CD4-positive, alpha-beta memory T cell (primary cell): ENCODE measurements at regions of chr10 and their contacts with region 1.

Region 1: DNA sequence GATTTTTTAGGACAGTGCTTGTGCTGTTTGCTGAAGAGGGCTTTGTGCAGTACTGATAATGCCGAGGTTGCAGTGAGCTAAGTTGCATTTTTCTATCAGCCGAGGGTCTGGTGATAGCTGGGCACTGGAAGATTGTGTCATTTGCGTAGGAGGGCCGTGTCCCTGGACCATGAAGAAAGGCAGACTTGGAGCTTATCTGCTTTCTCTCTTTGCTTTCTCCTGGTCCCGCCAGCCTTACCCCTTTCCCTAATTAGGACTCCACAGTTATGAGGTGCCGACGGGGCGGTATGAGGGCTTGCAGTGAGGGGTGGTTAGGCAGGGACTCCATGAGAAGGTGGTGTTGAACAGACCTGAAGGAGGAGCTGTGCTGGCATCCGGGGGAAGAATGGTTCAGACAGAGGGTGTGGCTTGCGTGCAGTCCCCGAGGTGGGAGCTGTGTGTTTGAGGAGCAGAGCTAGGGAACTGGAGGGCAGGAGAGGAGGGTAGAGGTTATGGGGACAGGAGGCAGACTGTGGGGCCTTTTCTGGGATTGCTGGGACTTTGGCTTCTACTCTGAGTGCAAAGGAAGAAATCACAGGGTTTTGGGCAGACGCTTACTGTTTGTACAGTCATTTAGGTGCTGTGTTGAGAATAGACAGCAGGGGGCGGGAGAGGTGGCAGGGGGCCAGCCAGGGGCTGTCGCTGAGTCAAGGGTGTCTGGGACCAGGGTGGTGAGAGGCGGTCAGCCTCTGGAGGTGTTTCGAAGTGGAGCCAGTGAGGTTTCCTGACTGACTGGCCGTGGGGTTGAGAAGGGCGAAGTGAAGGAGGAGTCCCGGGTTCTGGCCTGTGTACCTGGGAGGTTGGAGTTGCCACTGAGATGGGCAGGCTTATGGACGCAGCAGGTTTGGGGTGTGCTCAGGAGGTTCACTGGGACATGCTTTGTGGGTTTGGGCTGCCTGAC is 43.4 kb downstream of the PRF1 start:
- DNase-seq: peak; percentile 45 to 66 (median 53)
- H3K4me3 ChIP-seq: no peak overlapping the region
- H3K4me3 Mint-ChIP-seq: peak overlapping the region; percentile 72 to 90 (median 84)
- H3K27ac ChIP-seq: no peak overlapping the region
- H3K27ac Mint-ChIP-seq: peak overlapping the region in 5 of 7 donors; percentile 1 to 77 (median 32)
- H3K4me1 ChIP-seq: peaks cover 9% of the 10 kb centered on the region
- H3K4me1 Mint-ChIP-seq: peaks cover 8 to 15% (median 13%) of the 10 kb centered on the region in 4 donors
- H3K27me3 ChIP-seq: no peaks in the 10 kb centered on the region
- H3K27me3 Mint-ChIP-seq: no peaks in the 10 kb centered on the region

Region 2: GRCh38 chr10:69936091-69936490 is 623.0 kb before region 1 on chr10:
- CTCF ChIA-PET with region 1: no interaction called
- POLR2A ChIA-PET with region 1: no interaction called
- intact Hi-C with region 1: no loop called
- DNase-seq: no peak
- H3K4me3 ChIP-seq: no peak overlapping the region
- H3K4me3 Mint-ChIP-seq: no peak overlapping the region
- H3K27ac ChIP-seq: no peak overlapping the region
- H3K27ac Mint-ChIP-seq: no peak overlapping the region
- H3K4me1 ChIP-seq: no peaks in the 10 kb centered on the region
- H3K4me1 Mint-ChIP-seq: no peaks in the 10 kb centered on the region
- H3K27me3 ChIP-seq: no peaks in the 10 kb centered on the region
- H3K27me3 Mint-ChIP-seq: peaks cover 1 to 13% of the 10 kb centered on the region in 2 donors

Region 3: DNA sequence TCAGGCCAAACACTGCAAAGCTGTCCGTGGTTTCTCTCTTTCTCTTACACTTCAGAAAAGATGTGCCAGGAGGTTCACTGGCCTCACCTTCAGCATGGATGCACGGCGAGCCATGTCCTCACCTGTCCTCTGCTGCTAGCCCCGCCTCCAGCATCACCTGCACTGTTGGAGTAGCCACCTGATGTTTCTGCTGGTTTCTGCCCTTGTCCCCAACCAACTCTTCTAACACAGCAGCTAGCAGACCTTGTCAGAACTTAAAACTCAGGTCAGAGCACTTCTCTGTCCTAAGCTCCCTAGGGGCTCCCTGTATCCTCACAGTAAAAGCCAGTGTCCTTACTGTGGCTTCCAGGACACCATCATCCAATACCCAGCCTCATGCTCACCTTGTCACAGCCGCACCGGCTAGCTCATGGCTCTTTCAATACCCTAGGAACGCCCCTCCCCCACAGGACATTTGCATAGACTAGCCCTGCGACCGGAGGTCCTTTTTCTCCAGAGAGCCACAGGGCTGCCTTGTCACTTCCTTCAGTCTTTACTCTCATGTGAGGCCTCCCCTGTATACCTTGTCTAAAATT is 65.4 kb before region 1 on chr10:
- CTCF ChIA-PET with region 1: no interaction called
- POLR2A ChIA-PET with region 1: no interaction called
- intact Hi-C with region 1: no loop called
- DNase-seq: no peak
- H3K4me3 ChIP-seq: no peak overlapping the region
- H3K4me3 Mint-ChIP-seq: no peak overlapping the region
- H3K27ac ChIP-seq: no peak overlapping the region
- H3K27ac Mint-ChIP-seq: peak overlapping the region in 1 of 7 donors; percentile 25
- H3K4me1 ChIP-seq: peaks cover 6% of the 10 kb centered on the region
- H3K4me1 Mint-ChIP-seq: peaks cover 7 to 21% (median 12%) of the 10 kb centered on the region in 4 donors
- H3K27me3 ChIP-seq: no peaks in the 10 kb centered on the region
- H3K27me3 Mint-ChIP-seq: peaks cover 4 to 9% of the 10 kb centered on the region in 2 donors

Region 4: DNA sequence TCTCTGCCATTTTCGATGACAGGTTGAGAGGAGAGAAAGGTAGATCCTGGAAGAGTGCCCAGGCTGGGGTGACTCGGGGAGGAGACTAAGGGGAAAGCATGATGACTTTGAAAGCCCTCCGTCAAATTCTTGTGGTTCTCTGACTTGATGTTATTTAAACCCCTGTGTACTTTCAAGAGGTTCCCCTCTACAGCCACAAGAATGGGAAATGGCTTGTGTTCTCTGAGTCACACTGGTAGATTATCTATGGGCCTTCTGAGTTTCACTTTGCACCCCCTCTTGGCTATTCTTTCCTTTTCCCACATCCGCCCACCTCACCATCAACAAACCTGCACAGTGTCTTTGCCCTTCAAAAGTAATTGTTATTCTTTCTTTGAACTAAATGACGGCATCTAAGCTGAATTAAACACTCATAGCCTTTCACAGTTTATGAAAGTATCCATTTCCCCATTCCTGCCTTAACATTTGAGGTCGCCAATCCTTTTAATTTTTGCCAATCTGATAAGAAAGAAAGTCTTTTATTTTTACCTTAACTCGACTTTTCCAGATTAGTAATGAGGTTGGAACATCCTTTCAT is 19.3 kb after region 1 on chr10:
- CTCF ChIA-PET with region 1: interaction called, 6 read pairs
- POLR2A ChIA-PET with region 1: no interaction called
- intact Hi-C with region 1: loop called (anchors 1 kb)
- DNase-seq: peak; percentile 70 to 86 (median 73)
- H3K4me3 ChIP-seq: no peak overlapping the region
- H3K4me3 Mint-ChIP-seq: peak overlapping the region; percentile 3 to 75 (median 56)
- H3K27ac ChIP-seq: peak overlapping the region; percentile 9
- H3K27ac Mint-ChIP-seq: peak overlapping the region; percentile 77 to 88 (median 84)
- H3K4me1 ChIP-seq: peaks cover 49% of the 10 kb centered on the region
- H3K4me1 Mint-ChIP-seq: peaks cover 33 to 50% (median 45%) of the 10 kb centered on the region in 4 donors
- H3K27me3 ChIP-seq: no peaks in the 10 kb centered on the region
- H3K27me3 Mint-ChIP-seq: no peaks in the 10 kb centered on the region

Region 5: DNA sequence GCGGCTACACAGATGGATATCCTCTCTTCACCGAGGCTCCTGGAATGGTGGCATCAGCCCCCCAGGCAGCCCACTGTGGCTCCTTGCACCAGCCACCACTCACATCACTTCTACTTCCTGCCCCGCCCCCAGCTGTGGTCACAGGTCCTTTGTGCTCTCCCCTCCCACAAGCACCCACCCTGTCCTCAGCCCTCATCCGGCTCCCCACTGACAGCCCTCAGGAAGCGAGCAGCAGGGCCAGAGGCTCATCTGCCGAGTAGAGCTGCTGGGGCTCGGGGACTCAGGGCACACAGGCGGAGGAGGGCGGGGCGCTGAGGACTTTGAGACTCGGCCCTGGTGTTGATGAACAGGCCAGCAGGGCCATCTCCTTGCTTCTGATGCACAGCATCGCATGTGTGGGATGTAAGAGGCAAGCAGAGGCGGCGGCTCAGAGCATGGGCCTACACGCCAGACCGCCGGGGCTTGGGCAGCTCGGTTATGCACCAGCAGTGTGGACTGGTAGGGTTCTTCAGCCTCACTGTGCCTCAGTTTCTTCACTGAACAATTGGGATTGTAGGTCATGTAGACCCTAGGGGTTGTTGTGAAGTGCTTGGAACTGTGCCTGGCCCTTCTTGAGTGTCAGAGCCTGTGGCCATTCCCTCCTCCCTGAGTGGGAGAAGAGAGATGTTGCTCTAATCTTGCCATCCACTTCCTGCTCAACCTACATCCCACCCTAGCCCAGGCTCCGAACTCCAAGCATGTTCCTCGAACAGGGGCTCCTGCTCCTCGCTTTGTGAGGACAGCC is 43.7 kb after region 1 on chr10 and contains the start of gene PRF1:
- CTCF ChIA-PET with region 1: no interaction called
- POLR2A ChIA-PET with region 1: interaction called, 5 read pairs
- intact Hi-C with region 1: loop called (anchors 2 kb)
- DNase-seq: peak; percentile 74 to 82 (median 75)
- H3K4me3 ChIP-seq: peak within 1 kb of the TSS; percentile 56 to 74
- H3K4me3 Mint-ChIP-seq: peak within 1 kb of the TSS; percentile 93 to 98 (median 96)
- H3K27ac ChIP-seq: peak within 1 kb of the TSS; percentile 53
- H3K27ac Mint-ChIP-seq: peak within 1 kb of the TSS; percentile 85 to 97 (median 90)
- H3K4me1 ChIP-seq: peaks cover 44% of the 10 kb centered on the region
- H3K4me1 Mint-ChIP-seq: peaks cover 24 to 61% (median 43%) of the 10 kb centered on the region in 4 donors
- H3K27me3 ChIP-seq: no peaks in the 10 kb centered on the region
- H3K27me3 Mint-ChIP-seq: no peaks in the 10 kb centered on the region
- total RNA-seq, gene PRF1: 18.0 to 19.5 TPM

Region 6: DNA sequence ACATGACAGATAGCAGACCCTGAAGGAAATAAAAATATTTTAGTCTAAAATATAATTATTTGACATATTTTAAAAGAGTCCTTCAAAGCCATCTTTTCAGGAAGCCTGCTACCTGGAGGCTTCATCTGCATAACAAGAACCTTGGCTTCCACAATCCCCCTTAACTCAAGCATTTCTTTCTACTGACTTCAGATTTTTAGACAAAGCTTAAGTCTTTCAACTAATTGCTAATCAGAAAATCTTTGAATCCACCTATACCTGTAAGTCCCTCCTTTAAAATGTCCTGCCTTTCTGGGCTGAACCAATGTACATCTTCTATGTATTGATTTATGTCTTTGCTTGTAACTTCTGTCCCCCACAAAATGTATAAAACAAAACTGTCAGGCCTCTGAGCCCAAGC is 66.9 kb after region 1 on chr10:
- CTCF ChIA-PET with region 1: no interaction called
- POLR2A ChIA-PET with region 1: no interaction called
- intact Hi-C with region 1: no loop called
- DNase-seq: no peak
- H3K4me3 ChIP-seq: no peak overlapping the region
- H3K4me3 Mint-ChIP-seq: no peak overlapping the region
- H3K27ac ChIP-seq: no peak overlapping the region
- H3K27ac Mint-ChIP-seq: no peak overlapping the region
- H3K4me1 ChIP-seq: no peaks in the 10 kb centered on the region
- H3K4me1 Mint-ChIP-seq: no peaks in the 10 kb centered on the region
- H3K27me3 ChIP-seq: no peaks in the 10 kb centered on the region
- H3K27me3 Mint-ChIP-seq: peaks cover 4 to 5% of the 10 kb centered on the region in 2 donors